Posterior vena cava (tissue), 2 donors: ENCODE measurements at regions of chr16 and their contacts with region 1.

Region 1: GRCh38 chr16:68382296-68382718 is 66.0 kb downstream of the SMPD3 start:
- DNase-seq: no peak

Region 2: DNA sequence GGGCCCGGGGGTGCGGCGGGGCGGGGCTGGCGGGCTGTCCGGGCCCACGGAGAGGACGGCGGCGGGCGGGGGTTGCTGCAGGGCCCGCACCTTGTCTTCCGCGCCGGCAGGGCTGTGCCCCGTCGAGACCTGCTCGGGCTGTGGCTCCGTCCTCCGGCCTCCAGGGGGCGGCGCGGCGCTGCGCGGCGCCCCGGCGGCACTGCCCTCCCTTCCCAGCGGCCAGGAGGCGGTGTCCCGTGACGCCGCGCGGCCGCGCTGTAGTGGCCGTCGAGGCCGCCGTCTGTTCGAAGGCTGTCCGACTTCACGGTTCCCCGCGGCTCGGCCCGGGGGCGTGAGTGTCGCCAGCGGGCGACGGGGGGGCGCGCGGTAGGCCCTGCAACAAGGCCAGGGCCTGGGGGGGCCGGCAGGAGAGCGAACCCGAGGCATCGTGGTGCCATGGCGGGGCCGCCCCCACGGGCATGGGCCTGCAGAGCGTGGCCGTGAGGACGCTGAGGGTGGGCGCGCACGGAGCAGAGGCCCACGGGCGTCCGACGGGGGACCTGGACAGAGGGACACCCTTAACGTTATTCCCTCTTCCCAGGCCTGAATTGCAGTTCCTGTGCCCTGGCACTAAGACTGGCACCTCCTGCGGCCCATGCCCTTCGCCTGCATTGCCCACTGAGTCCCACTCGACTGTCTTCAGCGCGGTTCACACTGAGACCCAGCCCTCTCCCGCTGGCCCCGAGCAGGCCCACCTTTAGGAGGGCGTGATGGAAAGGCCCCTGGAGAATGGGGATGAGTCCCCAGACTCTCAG is 1102.8 kb before region 1 on chr16 and contains the start of gene PLEKHG4:
- intact Hi-C with region 1: loop called in 1 of 2 experiments (anchors 10 kb)
- DNase-seq: peak; percentile 93
- total RNA-seq, gene PLEKHG4: 3.2 to 5.4 TPM

Region 3: DNA sequence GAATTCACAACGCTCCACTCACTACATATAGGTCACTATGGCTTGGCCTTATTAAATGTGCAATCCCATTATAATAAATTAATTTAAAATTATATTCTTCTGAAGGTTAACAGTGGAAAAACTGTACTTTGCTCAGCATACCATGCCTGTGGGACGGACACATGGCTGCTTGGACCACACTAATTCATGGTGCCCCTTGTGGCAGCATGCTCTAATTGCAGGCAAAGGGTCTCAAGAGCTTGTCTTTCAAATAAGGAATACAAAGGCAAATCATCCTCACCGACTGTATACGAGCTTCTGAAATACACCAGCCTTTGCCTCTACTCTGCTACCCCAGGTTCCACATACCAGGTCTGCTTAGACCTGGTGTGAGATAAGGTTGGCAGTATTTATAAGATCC is 54.3 kb after region 1 on chr16:
- intact Hi-C with region 1: loop called in 1 of 2 experiments (anchors 2 kb)
- DNase-seq: no peak